Activated CD4-positive, alpha-beta T cell treated with anti-CD3 and anti-CD28 coated beads, Interleukin-2, amount 10 ng/mL, durations not matched to agents 24 days and 14 days (primary cell): ENCODE measurements at regions of chr16 and their contacts with region 1.

Region 1: GRCh38 chr16:78836802-78837491 is 737.5 kb downstream of the WWOX start:
- DNase-seq: no peak
- H3K4me3 Mint-ChIP-seq: peak overlapping the region; percentile 2
- H3K27ac Mint-ChIP-seq: peak overlapping the region; percentile 18
- H3K4me1 Mint-ChIP-seq: peaks cover 3% of the 10 kb centered on the region
- H3K27me3 Mint-ChIP-seq: no peaks in the 10 kb centered on the region

Region 2: DNA sequence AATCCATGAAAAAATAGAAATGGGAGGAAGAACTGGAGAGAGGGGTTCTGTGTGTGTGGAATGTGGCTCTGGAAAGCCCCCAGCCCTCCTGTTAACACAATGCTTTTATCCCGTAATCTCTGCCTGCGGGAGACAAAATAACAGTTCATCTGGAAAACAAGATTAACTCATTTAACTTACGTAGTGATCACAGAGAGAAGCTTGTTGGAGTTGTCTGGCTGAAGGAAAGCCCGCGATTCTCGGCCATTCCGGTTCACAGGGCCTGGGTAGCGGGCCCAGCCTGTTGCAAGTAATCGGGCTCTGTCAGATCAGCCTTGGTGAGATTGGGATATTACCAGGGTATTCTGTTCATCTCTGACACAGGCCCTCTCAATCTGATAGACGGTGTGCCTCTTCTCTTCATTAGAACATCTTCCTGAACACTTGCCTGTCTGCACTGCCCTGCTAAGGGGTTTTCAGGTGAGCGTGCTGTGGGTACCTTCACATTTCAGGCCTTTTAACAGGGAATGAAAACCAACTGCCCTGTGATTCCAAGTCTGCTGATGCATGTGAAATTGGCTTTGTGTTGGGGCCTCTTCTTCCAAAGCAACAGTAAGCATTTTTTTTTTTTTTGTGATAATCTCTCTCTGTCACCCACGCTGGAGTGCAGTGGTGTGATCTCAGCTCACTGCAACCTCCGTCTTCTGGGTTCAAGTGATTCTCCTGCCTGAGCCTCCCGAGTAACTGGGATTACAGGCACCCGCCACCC is 127.6 kb before region 1 on chr16:
- intact Hi-C with region 1: no loop called
- DNase-seq: no peak
- H3K4me3 Mint-ChIP-seq: no peak overlapping the region
- H3K27ac Mint-ChIP-seq: no peak overlapping the region
- H3K4me1 Mint-ChIP-seq: peaks cover 5% of the 10 kb centered on the region
- H3K27me3 Mint-ChIP-seq: no peaks in the 10 kb centered on the region

Region 3: DNA sequence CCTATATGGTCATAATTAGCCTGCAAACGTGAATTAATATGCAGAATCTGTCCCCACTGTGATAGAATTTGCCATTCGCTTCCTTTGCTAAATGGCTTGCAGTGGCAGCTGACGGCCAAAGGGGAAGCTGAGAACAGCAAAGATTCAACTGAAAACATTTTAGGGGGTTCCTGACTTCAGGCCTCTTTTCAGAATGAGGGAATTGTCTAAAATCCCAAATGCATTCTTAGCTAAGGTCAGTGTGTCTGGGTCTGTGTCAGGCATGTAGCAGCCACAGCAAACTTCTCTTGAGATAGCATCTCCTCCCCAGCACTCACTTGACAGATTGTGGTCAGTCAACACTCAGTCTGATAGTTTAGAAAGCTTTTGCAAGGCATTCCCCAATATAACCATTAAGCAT is 36.4 kb before region 1 on chr16:
- intact Hi-C with region 1: loop called (anchors 5 kb)
- DNase-seq: peak; percentile 57
- H3K4me3 Mint-ChIP-seq: no peak overlapping the region
- H3K27ac Mint-ChIP-seq: peak overlapping the region; percentile 12
- H3K4me1 Mint-ChIP-seq: peaks cover 7% of the 10 kb centered on the region
- H3K27me3 Mint-ChIP-seq: peaks cover 2% of the 10 kb centered on the region

Region 4: DNA sequence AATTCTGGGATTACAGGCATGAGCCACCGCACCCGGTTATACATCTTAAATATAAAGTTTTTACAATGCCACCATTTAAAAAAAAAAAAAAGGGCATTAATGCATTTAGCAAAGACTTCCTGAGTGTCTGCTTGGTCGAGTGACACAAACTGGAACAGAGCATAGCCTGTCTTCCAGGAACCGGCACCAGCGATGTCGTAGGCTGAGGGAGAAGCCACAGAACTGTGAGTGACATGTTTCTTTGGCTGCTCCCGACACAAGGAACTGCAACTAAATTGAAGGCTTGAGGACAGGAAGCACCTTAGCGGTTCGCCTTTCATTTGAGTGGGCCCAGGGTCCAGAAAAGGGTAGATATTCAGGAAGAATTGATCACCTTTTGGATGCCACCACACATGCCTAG is 45.8 kb after region 1 on chr16:
- intact Hi-C with region 1: no loop called
- DNase-seq: no peak
- H3K4me3 Mint-ChIP-seq: no peak overlapping the region
- H3K27ac Mint-ChIP-seq: peak overlapping the region; percentile 63
- H3K4me1 Mint-ChIP-seq: peaks cover 3% of the 10 kb centered on the region
- H3K27me3 Mint-ChIP-seq: no peaks in the 10 kb centered on the region